Gastrocnemius medialis (tissue), 4 donors: ENCODE measurements at regions of chr12 and their contacts with region 1.

Region 1: GRCh38 chr12:110531741-110532333 is 29.7 kb downstream of the RAD9B start:
- DNase-seq: no peak
- ATAC-seq: no peak
- H3K4me3 ChIP-seq: no peak overlapping the region
- H3K27ac ChIP-seq: peak overlapping the region in 3 of 4 donors; percentile 43 to 95 (median 89)
- H3K4me1 ChIP-seq: peaks cover 49 to 51% of the 10 kb centered on the region in 2 donors
- H3K27me3 ChIP-seq: no peaks in the 10 kb centered on the region
- CTCF ChIP-seq: no peak
- POLR2A ChIP-seq: no peak

Region 2: DNA sequence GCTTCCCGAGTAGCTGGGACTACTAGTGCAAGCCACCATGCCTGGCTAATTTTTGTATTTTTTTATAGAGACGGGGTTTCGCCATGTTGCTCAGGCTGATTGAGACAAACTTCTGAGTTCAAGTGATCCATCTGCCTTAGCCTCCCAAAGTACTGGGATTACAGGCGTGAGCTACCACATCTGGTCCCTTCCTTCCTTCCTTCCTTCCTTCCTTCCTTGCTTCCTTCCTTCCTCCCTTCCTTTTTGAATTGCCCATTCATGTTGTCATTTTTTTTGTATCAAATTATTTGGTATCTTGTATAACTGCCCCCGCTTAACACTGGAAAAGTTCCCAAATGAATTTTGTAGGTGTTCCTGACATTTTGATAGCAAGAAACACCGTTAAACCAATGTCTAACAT is 18.0 kb before region 1 on chr12:
- in situ Hi-C with region 1: no loop called
- intact Hi-C with region 1: loop called (anchors 2 kb)
- DNase-seq: no peak
- ATAC-seq: no peak
- H3K4me3 ChIP-seq: no peak overlapping the region
- H3K27ac ChIP-seq: no peak overlapping the region
- H3K4me1 ChIP-seq: no peaks in the 10 kb centered on the region
- H3K27me3 ChIP-seq: no peaks in the 10 kb centered on the region
- CTCF ChIP-seq: no peak
- POLR2A ChIP-seq: no peak

Region 3: GRCh38 chr12:111111681-111112080 is 579.8 kb after region 1 on chr12:
- in situ Hi-C with region 1: no loop called
- intact Hi-C with region 1: no loop called
- DNase-seq: no peak
- ATAC-seq: no peak
- H3K4me3 ChIP-seq: no peak overlapping the region
- H3K27ac ChIP-seq: no peak overlapping the region
- H3K4me1 ChIP-seq: no peaks in the 10 kb centered on the region
- H3K27me3 ChIP-seq: no peaks in the 10 kb centered on the region
- CTCF ChIP-seq: no peak
- POLR2A ChIP-seq: no peak